ENCODE measurements at regions of chr16 and their contacts with region 1.

Region 1: GRCh38 chr16:4957720-4958509 is at the start of gene SEC14L5:
- DNase-seq: peak; percentile 84
- H3K4me3 ChIP-seq: peak within 1 kb of the TSS; percentile 59
- CTCF ChIP-seq: no peak

Region 2: DNA sequence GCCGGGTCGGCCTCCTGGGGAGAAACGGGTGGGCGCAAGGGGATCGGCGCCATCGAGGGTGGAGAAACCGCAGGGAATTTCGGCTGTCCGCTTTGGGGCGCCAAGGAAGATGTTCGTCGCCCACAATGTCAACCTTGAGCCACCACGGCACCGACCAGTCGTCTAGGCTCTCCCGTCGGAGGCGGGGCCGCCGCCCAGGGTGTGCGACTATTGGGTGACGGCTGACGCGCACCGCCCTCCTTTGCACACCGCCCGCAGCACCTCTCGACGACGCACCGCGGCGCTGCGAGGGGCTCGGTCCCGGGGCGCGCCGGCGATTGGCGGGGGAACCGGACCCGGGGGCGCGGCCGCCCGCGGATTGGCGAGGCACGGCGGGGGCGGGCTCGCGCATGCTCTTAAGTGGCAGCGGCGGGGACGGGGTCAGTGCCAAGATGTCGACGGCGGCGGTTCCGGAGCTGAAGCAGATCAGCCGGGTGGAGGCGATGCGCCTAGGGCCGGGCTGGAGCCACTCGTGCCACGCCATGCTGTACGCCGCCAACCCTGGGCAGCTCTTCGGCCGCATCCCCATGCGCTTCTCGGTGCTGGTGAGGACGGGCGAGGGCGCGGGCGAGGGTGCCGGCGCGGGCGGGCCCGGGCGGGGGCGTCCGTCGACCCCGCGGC is 264.5 kb before region 1 on chr16 and contains the start of gene NUDT16L1:
- CTCF ChIA-PET with region 1: interaction called, 20 read pairs
- POLR2A ChIA-PET with region 1: no interaction called
- DNase-seq: peak; percentile 17
- H3K4me3 ChIP-seq: peak within 1 kb of the TSS; percentile 96
- CTCF ChIP-seq: peak; percentile 55

Region 3: GRCh38 chr16:4836727-4837126 is 121.2 kb before region 1 on chr16:
- CTCF ChIA-PET with region 1: interaction called, 11 read pairs
- POLR2A ChIA-PET with region 1: no interaction called
- DNase-seq: no peak
- H3K4me3 ChIP-seq: no peak overlapping the region
- CTCF ChIP-seq: no peak

Region 4: GRCh38 chr16:4852207-4852872 is 105.6 kb before region 1 on chr16:
- CTCF ChIA-PET with region 1: interaction called, 20 read pairs
- POLR2A ChIA-PET with region 1: no interaction called
- DNase-seq: no peak
- H3K4me3 ChIP-seq: no peak overlapping the region
- CTCF ChIP-seq: no peak

Region 5: DNA sequence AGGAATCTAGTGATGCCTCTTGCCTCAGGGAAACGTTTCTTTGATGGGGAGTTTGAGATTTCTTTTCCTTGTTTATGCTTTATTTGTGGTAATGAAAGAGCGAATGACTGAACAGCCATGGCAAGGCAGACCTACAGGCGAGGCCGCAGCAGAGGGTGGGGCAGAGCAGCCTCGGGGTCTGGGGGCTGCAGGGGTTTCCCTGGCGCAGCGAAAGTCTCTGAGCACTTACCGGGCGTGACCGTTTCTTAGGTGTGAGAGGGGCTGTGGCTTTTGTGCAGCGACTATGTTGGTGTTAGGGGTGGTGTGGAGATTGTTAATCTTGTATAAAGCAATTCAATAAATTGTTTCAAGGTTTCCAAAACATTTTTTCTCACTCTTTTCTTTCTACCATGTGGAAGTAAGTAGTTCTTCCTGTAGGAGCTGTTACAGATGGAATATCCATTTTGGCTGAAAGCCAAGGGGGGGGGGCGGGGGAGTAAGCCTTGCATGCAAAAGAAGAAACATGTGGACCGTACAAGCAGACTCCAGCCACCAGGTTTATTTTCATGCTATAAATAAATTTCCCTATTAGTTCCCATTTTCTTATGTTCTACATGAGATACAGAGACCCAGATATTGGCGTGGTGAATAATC is 75.8 kb before region 1 on chr16:
- CTCF ChIA-PET with region 1: interaction called, 10 read pairs
- POLR2A ChIA-PET with region 1: no interaction called
- DNase-seq: no peak
- H3K4me3 ChIP-seq: no peak overlapping the region
- CTCF ChIP-seq: no peak

Region 6: DNA sequence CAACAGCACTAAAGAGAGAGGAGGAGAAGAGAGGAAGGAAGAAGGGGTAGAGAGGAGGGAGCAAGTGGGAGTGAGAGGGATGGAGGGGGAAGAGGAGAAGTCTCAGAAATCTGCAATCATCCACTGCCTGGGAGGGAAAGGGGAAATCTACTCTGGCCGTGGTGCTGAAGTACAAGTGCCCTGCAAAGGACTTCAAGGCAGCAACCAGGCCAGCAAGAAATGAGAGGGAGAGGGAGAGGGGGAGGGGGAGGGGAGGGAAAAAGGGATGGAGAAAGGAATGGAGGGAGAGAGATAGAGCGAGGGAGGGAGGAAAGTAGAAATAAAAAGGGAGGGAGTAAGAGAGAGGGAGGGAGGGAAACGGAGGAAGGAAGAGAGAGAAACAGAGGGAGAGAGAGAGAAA is 270.5 kb after region 1 on chr16:
- CTCF ChIA-PET with region 1: no interaction called
- POLR2A ChIA-PET with region 1: no interaction called
- DNase-seq: no peak
- H3K4me3 ChIP-seq: no peak overlapping the region
- CTCF ChIP-seq: no peak

Measured in AG04449 (cell line).